Activated B cell treated with CpG ODN at 0.5 μM for 24 hours (primary cell): ENCODE measurements at regions of chr14 and their contacts with region 1.

Region 1: DNA sequence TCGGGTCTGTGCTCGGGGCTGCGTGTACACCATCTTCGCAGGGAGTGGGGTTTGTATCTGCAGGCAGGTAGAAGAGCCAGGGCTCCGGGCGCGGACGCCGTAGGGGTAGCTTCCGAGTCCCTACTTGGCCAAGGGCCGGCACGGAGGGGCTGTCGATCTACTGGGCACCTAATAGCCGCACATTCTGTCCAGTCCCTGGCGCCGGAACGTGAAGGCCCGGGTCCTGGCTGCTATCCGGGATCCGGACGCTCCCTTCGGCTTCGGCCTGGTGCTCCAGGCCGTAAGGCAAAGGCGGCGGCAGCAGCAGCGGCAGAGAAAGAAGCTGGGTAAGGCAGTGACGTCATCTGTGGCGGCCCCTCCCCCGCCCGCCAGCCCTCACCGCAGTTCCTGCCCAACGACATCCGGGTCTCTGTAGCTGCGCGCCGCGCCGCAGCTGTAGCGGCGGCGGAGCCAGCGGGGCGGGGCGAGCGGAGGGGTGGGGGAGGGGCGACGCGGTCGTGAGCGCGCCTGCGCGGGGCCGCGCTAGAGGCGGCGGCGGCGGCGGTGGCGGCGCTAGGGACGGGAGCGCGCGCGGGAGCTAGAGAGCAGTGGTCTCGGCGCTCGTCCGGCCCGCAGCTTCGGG is at the start of gene PPM1A:
- DNase-seq: peak; percentile 89
- ATAC-seq: peak; percentile 68
- H3K4me3 Mint-ChIP-seq: peak within 1 kb of the TSS; percentile 99
- H3K27ac Mint-ChIP-seq: peak within 1 kb of the TSS; percentile 100
- H3K4me1 Mint-ChIP-seq: peaks cover 52% of the 10 kb centered on the region
- H3K27me3 Mint-ChIP-seq: peaks cover 2% of the 10 kb centered on the region
- CTCF ChIP-seq: no peak
- total RNA-seq, gene PPM1A: 40.1 and 47.5 TPM in 2 replicates

Region 2: DNA sequence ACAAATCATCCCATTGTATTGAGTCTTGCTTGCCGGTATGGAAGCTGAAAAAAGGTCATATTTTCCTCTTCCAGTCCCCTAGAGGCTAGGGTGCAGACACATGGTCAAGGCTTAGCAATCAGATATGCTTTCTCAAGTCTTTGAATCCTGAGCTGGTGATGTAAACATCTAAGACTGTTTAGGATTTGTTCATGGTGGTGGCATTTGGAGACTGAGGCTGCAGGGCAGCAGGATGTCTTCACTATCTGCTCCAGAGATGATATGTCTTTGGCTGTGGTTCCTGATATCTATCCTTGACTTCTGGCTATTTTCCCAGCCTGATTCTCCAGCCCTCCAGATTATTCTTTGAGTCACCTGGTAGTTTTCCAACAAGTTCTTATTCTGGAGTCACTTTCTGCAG is 1661.5 kb before region 1 on chr14:
- CTCF ChIA-PET with region 1: no interaction called
- POLR2A ChIA-PET with region 1: no interaction called
- intact Hi-C with region 1: no loop called
- DNase-seq: no peak
- ATAC-seq: no peak
- H3K4me3 Mint-ChIP-seq: no peak overlapping the region
- H3K27ac Mint-ChIP-seq: no peak overlapping the region
- H3K4me1 Mint-ChIP-seq: no peaks in the 10 kb centered on the region
- H3K27me3 Mint-ChIP-seq: peaks cover 15% of the 10 kb centered on the region
- CTCF ChIP-seq: no peak

Region 3: DNA sequence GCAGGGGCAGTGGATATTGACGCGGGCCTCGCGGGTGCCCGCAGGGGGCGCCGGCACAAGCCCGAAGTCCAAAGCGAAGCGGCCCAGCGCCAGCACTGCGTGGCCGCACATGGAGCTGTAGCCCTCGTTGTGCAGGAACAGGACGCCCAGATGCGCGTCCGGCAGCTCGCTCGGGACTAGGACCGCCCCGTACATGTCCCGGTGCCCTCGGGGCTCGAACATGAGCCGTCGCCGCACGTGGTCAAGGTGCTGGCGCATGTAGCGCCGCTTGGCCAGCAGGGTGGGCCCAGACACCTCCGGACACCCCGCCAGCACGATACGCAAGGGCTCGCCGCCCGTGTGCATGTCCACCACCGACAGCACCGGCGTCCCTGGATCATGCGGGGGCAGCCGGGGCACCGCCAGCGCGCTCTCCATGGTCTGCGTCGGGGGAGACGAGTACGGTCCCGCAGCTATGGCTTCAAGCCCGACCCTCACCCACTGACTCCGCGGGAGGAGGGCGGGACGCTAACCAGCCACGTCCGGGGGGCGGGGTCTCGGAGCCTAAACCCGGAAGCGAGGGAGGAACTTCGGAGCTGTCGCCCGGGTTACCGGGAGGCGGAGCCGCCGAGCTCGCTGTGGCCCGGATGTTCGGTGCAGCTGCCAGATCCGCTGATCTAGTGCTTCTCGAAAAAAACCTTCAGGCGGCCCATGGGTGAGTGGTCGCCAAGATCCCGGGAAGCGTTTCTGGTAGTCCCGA is 764.7 kb before region 1 on chr14 and contains the starts of genes JKAMP and L3HYPDH:
- CTCF ChIA-PET with region 1: no interaction called
- POLR2A ChIA-PET with region 1: interaction called, 11 read pairs
- intact Hi-C with region 1: loop called (anchors 1 kb)
- DNase-seq: peak; percentile 96
- ATAC-seq: peak; percentile 92
- H3K4me3 Mint-ChIP-seq: peak within 1 kb of the TSS; percentile 98
- H3K27ac Mint-ChIP-seq: peak within 1 kb of the TSS; percentile 96
- H3K4me1 Mint-ChIP-seq: peaks cover 52% of the 10 kb centered on the region
- H3K27me3 Mint-ChIP-seq: no peaks in the 10 kb centered on the region
- CTCF ChIP-seq: no peak
- total RNA-seq, gene JKAMP: 18.1 and 28.8 TPM in 2 replicates
- total RNA-seq, gene L3HYPDH: 22.1 and 30.2 TPM in 2 replicates

Region 4: DNA sequence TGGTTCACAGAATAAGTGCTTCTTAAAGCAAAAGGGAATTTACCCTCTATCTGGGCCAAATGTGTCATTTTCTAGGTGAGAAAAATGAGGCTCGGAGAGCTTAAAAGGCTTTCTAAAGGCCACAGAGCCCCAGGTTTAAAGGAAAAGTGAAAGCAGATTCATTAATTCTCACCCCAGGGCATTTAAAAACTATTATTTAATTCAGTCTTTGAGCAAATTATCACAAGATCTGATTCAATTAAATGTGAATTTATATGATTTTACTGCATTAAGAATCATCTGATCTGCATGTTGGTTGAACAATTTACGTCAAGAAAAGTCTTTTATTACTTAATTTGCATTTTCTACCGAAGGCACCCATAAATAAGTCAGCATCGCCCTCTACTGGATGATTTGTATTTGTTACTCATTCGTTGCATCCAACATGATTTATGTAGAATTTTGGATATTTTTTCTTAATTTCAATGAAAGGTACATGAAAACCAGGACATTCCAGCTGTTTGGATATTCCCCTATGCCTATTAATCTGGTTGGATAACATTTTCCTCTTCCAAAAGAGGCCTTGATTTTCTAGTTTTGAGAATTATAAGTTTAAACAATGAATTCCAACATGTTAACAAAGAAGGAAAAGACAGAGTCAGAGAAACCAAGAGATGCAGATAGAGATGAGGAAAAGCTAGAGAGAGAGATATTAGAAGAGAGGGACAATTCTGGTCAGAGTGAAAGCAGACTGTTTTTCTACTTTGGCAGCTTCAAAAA is 64.5 kb before region 1 on chr14:
- CTCF ChIA-PET with region 1: no interaction called
- POLR2A ChIA-PET with region 1: interaction called, 13 read pairs
- intact Hi-C with region 1: loop called (anchors 1 kb)
- DNase-seq: no peak
- ATAC-seq: peak; percentile 56
- H3K4me3 Mint-ChIP-seq: peak overlapping the region; percentile 82
- H3K27ac Mint-ChIP-seq: peak overlapping the region; percentile 87
- H3K4me1 Mint-ChIP-seq: peaks cover 17% of the 10 kb centered on the region
- H3K27me3 Mint-ChIP-seq: no peaks in the 10 kb centered on the region
- CTCF ChIP-seq: peak; percentile 89

Region 5: DNA sequence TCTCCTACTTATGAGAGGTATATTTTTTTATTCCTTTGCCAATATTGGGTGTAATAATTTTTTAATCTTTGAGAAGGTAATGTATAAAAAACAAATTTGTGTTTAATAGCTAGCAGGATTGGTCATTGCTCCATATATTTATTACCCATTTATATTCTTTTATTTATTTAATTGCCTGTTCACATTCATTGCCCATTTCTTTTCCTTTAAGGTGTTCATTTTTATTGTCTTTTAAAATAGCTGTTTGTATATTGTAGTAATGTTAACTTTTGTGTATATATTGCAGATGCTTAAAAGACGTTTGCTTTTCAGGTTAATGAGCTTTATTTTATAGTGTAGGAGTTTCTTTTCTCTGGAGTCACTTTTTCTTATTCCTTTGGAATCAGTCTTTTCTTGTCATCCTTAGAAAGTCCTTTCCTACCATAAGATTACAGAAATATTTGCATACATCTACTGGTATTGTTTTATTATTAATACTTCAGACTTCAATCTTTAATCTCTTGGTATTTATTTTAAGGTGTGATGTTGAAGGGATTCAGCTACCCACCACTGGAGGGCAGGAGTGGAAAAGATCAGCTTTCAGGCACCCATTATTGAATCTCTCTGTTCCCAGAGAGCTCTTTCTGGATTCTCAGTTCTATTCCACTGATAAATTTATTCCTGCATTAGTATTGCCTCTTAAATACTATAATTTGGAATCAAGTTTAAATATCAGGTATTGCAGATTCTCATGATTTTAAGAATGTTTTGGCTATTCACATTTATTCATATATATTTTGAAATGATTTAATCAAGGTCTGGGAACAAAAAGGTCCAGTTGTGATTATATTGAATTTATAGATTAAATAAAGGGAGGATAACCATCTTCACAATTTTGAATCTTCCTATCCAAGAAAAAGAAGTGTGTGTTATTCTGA is 17.5 kb after region 1 on chr14:
- CTCF ChIA-PET with region 1: interaction called, 22 read pairs
- POLR2A ChIA-PET with region 1: interaction called, 4 read pairs
- intact Hi-C with region 1: loop called (anchors 1 kb)
- DNase-seq: no peak
- ATAC-seq: peak; percentile 54
- H3K4me3 Mint-ChIP-seq: no peak overlapping the region
- H3K27ac Mint-ChIP-seq: no peak overlapping the region
- H3K4me1 Mint-ChIP-seq: peaks cover 22% of the 10 kb centered on the region
- H3K27me3 Mint-ChIP-seq: no peaks in the 10 kb centered on the region
- CTCF ChIP-seq: no peak

Region 6: GRCh38 chr14:60845523-60845922 is 596.7 kb after region 1 on chr14:
- CTCF ChIA-PET with region 1: no interaction called
- POLR2A ChIA-PET with region 1: no interaction called
- intact Hi-C with region 1: loop called (anchors 1 kb)
- DNase-seq: no peak
- ATAC-seq: peak; percentile 83
- H3K4me3 Mint-ChIP-seq: peak overlapping the region; percentile 64
- H3K27ac Mint-ChIP-seq: peak overlapping the region; percentile 92
- H3K4me1 Mint-ChIP-seq: peaks cover 23% of the 10 kb centered on the region
- H3K27me3 Mint-ChIP-seq: no peaks in the 10 kb centered on the region
- CTCF ChIP-seq: no peak

Region 7: GRCh38 chr14:61153431-61153830 is 904.6 kb after region 1 on chr14:
- CTCF ChIA-PET with region 1: no interaction called
- POLR2A ChIA-PET with region 1: no interaction called
- intact Hi-C with region 1: no loop called
- DNase-seq: no peak
- ATAC-seq: no peak
- H3K4me3 Mint-ChIP-seq: no peak overlapping the region
- H3K27ac Mint-ChIP-seq: no peak overlapping the region
- H3K4me1 Mint-ChIP-seq: no peaks in the 10 kb centered on the region
- H3K27me3 Mint-ChIP-seq: peaks cover 15% of the 10 kb centered on the region
- CTCF ChIP-seq: no peak

Region 8: GRCh38 chr14:62081012-62081612 is 1832.3 kb after region 1 on chr14:
- CTCF ChIA-PET with region 1: no interaction called
- POLR2A ChIA-PET with region 1: no interaction called
- intact Hi-C with region 1: loop called (anchors 1 kb)
- DNase-seq: peak; percentile 44
- ATAC-seq: peak; percentile 69
- H3K4me3 Mint-ChIP-seq: peak overlapping the region; percentile 78
- H3K27ac Mint-ChIP-seq: peak overlapping the region; percentile 94
- H3K4me1 Mint-ChIP-seq: peaks cover 80% of the 10 kb centered on the region
- H3K27me3 Mint-ChIP-seq: no peaks in the 10 kb centered on the region
- CTCF ChIP-seq: no peak